GM12878 (cell line): ENCODE measurements at regions of chr12 and their contacts with region 1.

Region 1: DNA sequence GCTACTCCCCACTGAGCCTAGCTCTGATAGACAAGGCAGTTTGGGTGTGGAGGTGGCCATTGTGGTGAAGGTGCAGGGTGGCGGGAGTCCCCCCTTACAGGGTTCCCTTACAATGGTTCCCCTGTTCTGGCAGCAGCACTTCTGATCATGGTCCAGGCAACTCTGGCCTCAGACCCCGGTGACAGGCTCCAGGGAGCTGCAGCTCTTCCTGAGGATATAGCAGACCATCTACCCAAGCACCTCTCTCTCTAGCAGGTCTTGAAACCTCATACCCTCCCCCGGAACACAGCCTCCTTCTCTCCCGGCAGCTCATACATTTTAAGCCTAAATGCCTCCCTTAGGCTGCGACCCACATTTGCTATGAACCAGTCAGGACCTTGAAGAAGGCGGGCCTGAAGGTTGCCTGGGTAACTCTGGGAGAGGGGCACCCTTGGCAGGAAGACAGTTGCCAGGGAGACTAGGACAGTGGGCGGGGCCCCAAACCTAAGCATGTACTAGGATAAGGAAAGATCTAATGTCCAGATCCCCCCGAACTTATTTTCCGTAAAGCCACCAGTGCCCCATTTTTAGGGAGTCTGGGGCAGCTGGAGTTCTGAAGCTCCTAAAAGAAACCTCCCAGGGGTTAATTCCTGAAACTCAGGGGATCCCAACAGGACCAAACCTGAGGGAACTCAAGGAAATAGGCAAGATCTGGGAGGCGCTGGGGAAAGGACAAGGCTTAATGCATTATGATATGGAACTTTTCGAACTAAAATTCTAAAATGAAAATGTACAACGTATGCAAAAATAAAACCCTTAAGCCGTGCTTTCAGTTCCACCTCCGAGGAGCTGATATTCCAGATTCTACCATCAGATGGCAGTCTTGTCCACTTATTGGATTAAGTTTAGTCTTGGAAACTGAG is 4.5 kb upstream of the GDF11 start:
- DNase-seq: peak; percentile 77
- ATAC-seq: peak; percentile 93
- H3K4me3 ChIP-seq: peak overlapping the region; percentile 78
- H3K27ac ChIP-seq: peak overlapping the region; percentile 45
- H3K4me1 ChIP-seq: peaks cover 7% of the 10 kb centered on the region
- H3K27me3 ChIP-seq: no peaks in the 10 kb centered on the region
- CTCF ChIP-seq: peak; percentile 68 to 89 (median 87); a peak in 5 of 6 replicates
- EP300 ChIP-seq: no peak
- POLR2A ChIP-seq: no peak
- RAD21 ChIP-seq: peak; percentile 96

Region 2: GRCh38 chr12:55250944-55251343 is 487.4 kb before region 1 on chr12:
- CTCF ChIA-PET with region 1: no interaction called
- POLR2A ChIA-PET with region 1: no interaction called
- RAD21 ChIA-PET with region 1: no interaction called
- SMC1A ChIA-PET with region 1: no interaction called
- in situ Hi-C with region 1: no loop called
- intact Hi-C with region 1: no loop called
- DNase-seq: no peak
- ATAC-seq: no peak
- H3K4me3 ChIP-seq: no peak overlapping the region
- H3K27ac ChIP-seq: no peak overlapping the region
- H3K4me1 ChIP-seq: no peaks in the 10 kb centered on the region
- H3K27me3 ChIP-seq: no peaks in the 10 kb centered on the region; a peak in 1 of 4 replicates
- CTCF ChIP-seq: no peak
- EP300 ChIP-seq: no peak
- POLR2A ChIP-seq: no peak
- RAD21 ChIP-seq: no peak

Region 3: DNA sequence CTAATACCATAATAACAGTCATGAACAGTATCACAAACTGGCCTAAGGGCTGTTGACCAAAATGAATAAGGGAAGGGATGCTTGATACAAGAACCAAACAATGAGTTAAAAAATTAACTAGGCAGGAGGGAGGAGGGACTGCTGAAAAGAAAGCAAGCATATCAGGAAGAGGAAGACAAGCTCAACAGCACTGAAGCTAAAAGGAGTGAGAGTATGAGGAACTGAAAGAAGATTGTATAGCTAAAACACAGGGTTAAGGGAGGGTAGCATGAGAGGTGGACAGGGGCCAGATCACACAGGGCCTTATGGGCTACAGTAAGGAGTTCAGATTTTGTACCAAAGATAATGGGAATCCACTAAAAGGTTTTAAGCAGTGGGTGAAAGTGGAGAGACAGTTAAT is 64.7 kb before region 1 on chr12:
- CTCF ChIA-PET with region 1: interaction called, 9 read pairs
- POLR2A ChIA-PET with region 1: no interaction called
- RAD21 ChIA-PET with region 1: interaction called, 3 read pairs
- SMC1A ChIA-PET with region 1: interaction called, 12 read pairs
- in situ Hi-C with region 1: no loop called
- intact Hi-C with region 1: no loop called
- DNase-seq: peak; percentile 76
- ATAC-seq: peak; percentile 100
- H3K4me3 ChIP-seq: 0 out of 2 replicates have a peak overlapping the region, but pooled peaks have one; percentile 16
- H3K27ac ChIP-seq: peak overlapping the region; percentile 62; the same call in 1 of the 2 replicates
- H3K4me1 ChIP-seq: peaks cover 10% of the 10 kb centered on the region
- H3K27me3 ChIP-seq: no peaks in the 10 kb centered on the region
- CTCF ChIP-seq: no peak
- EP300 ChIP-seq: no peak
- POLR2A ChIP-seq: peak; percentile 43; the same call in 1 of the 2 replicates
- RAD21 ChIP-seq: no peak

Region 4: GRCh38 chr12:55688716-55689655 is 49.4 kb before region 1 on chr12:
- CTCF ChIA-PET with region 1: no interaction called
- POLR2A ChIA-PET with region 1: no interaction called
- RAD21 ChIA-PET with region 1: no interaction called
- SMC1A ChIA-PET with region 1: no interaction called
- in situ Hi-C with region 1: no loop called
- intact Hi-C with region 1: no loop called
- DNase-seq: no peak
- ATAC-seq: no peak
- H3K4me3 ChIP-seq: no peak overlapping the region
- H3K27ac ChIP-seq: no peak overlapping the region
- H3K4me1 ChIP-seq: peaks cover 6% of the 10 kb centered on the region
- H3K27me3 ChIP-seq: no peaks in the 10 kb centered on the region; a peak in 1 of 4 replicates
- CTCF ChIP-seq: no peak
- EP300 ChIP-seq: no peak
- POLR2A ChIP-seq: no peak
- RAD21 ChIP-seq: no peak

Region 5: DNA sequence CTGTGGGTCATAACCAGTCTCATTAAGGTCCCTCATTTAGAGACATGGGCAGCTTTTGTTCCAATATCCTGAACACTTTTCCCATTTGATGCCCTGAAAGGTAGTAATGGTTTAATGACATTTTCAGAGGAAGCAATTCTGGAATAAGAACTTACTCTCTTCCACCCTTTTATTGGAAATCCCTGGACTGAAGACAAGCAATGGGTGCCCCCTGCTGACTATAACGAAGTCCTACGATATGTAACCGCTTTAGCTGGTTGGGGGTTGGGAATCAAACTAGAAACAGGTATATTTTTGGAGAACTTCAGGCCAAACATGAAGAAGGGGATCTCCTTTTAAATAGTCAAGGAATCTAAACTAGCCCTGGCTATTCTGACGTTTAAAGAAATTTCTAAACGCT is 58.7 kb after region 1 on chr12:
- CTCF ChIA-PET with region 1: interaction called, 65 read pairs
- POLR2A ChIA-PET with region 1: no interaction called
- RAD21 ChIA-PET with region 1: interaction called, 13 read pairs
- SMC1A ChIA-PET with region 1: interaction called, 30 read pairs
- in situ Hi-C with region 1: no loop called
- intact Hi-C with region 1: loop called (anchors 5 kb)
- DNase-seq: no peak
- ATAC-seq: no peak
- H3K4me3 ChIP-seq: no peak overlapping the region
- H3K27ac ChIP-seq: no peak overlapping the region
- H3K4me1 ChIP-seq: no peaks in the 10 kb centered on the region
- H3K27me3 ChIP-seq: no peaks in the 10 kb centered on the region
- CTCF ChIP-seq: peak; percentile 14 to 36 (median 19); a peak in 3 of 6 replicates
- EP300 ChIP-seq: no peak
- POLR2A ChIP-seq: no peak
- RAD21 ChIP-seq: peak; percentile 47

Region 6: GRCh38 chr12:55926738-55927587 is 188.6 kb after region 1 on chr12:
- CTCF ChIA-PET with region 1: interaction called, 48 read pairs
- POLR2A ChIA-PET with region 1: interaction called, 24 read pairs
- RAD21 ChIA-PET with region 1: interaction called, 30 read pairs
- SMC1A ChIA-PET with region 1: interaction called, 23 read pairs
- in situ Hi-C with region 1: no loop called
- intact Hi-C with region 1: loop called (anchors 1 kb)
- DNase-seq: peak; percentile 81
- ATAC-seq: peak; percentile 65
- H3K4me3 ChIP-seq: peak overlapping the region; percentile 93
- H3K27ac ChIP-seq: peak overlapping the region; percentile 96
- H3K4me1 ChIP-seq: peaks cover 3% of the 10 kb centered on the region; the same call in 1 of the 2 replicates
- H3K27me3 ChIP-seq: no peaks in the 10 kb centered on the region
- CTCF ChIP-seq: peak; percentile 73 to 79 (median 73)
- EP300 ChIP-seq: peak; percentile 25 to 45; a peak in 1 of 4 replicates
- POLR2A ChIP-seq: peak; percentile 80
- RAD21 ChIP-seq: peak; percentile 38

Region 7: DNA sequence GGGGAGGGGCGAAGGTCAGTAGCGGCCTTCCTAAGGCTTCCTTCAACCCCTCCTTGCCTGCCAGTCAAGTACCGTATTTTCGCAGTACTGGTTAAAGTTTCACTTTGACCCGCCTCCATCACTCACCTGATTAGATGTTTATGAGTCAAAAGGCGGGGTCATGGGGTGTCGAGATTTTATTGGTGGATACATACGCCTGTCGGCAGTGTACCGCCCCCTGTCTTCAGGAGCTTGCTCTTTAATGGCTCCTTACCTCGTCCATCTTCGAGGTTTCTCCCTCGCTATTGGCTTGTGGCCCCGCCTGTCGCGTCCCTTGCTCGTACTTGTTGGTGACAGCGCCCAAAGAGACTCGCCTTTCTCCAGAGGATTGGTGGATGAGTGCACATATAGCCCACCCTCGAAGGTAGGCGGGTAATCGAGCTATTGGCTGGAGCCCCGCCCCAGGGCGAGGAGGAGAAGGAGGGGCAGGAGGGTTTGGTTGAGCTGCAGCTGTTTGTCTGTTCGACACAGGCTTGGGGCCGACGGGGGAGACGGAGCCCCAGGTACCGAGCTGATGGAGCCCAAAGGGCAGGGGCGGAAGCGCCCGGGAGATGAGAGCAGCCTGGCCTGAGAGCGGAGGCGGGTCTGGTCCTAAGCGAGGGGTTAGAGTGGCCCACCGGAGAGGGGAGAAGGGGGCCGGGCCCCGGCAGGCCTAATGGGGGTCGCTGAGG is 235.4 kb after region 1 on chr12 and contains the start of gene RAB5B:
- CTCF ChIA-PET with region 1: interaction called, 14 read pairs
- POLR2A ChIA-PET with region 1: interaction called, 10 read pairs
- RAD21 ChIA-PET with region 1: interaction called, 21 read pairs
- SMC1A ChIA-PET with region 1: interaction called, 15 read pairs
- in situ Hi-C with region 1: no loop called
- intact Hi-C with region 1: no loop called
- DNase-seq: peak; percentile 100
- ATAC-seq: peak; percentile 91
- H3K4me3 ChIP-seq: peak within 1 kb of the TSS; percentile 88
- H3K27ac ChIP-seq: peak within 1 kb of the TSS; percentile 85
- H3K4me1 ChIP-seq: peaks cover 2% of the 10 kb centered on the region; the same call in 1 of the 2 replicates
- H3K27me3 ChIP-seq: no peaks in the 10 kb centered on the region
- CTCF ChIP-seq: no peak
- EP300 ChIP-seq: no peak
- POLR2A ChIP-seq: peak; percentile 97
- RAD21 ChIP-seq: no peak
- polyA plus RNA-seq, gene RAB5B: 7.5 to 11.3 TPM

Region 8: GRCh38 chr12:56104109-56104814 is 365.9 kb after region 1 on chr12 and contains the start of gene PA2G4:
- CTCF ChIA-PET with region 1: interaction called, 7 read pairs
- POLR2A ChIA-PET with region 1: interaction called, 8 read pairs
- RAD21 ChIA-PET with region 1: interaction called, 12 read pairs
- SMC1A ChIA-PET with region 1: interaction called, 11 read pairs
- in situ Hi-C with region 1: no loop called
- intact Hi-C with region 1: loop called (anchors 1 kb)
- DNase-seq: peak; percentile 97
- ATAC-seq: peak; percentile 97
- H3K4me3 ChIP-seq: peak within 1 kb of the TSS; percentile 97
- H3K27ac ChIP-seq: peak within 1 kb of the TSS; percentile 86
- H3K4me1 ChIP-seq: peaks cover 3% of the 10 kb centered on the region; the same call in 1 of the 2 replicates
- H3K27me3 ChIP-seq: no peaks in the 10 kb centered on the region; a peak in 1 of 4 replicates
- CTCF ChIP-seq: no peak
- EP300 ChIP-seq: peak in 1 of 2 experiments; percentile 47; a peak in 2 of 4 replicates
- POLR2A ChIP-seq: peak; percentile 93
- RAD21 ChIP-seq: no peak
- polyA plus RNA-seq, gene PA2G4: 148 to 215 TPM